Left ventricle myocardium superior (tissue), 1 donor: ENCODE measurements at regions of chr5 and their contacts with region 1.

Region 1: GRCh38 chr5:138077065-138077696 is 6.7 kb upstream of the WNT8A start:
- DNase-seq: peak; percentile 52
- ATAC-seq: peak; percentile 71

Region 2: DNA sequence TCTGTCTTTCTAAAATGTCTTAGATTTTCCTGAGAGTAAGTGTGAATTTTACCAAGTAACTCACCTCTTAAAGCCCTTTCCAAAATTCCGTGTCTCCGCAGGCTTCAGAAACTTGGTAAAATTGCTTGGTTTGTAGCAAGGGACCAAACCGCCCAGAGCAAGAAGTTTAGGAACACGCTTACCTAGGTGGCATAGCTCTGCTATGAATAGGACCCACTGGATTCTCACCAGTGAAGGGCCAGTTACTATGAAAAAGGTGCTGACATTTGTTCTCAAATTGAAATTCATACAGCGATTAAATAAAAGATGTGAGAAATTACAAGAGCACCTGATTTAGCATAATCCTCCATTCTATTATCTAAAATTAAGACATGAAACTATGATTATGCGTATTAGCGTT is 55.4 kb after region 1 on chr5:
- intact Hi-C with region 1: loop called (anchors 5 kb)
- DNase-seq: no peak
- ATAC-seq: no peak

Region 3: GRCh38 chr5:138641547-138642298 is 564.5 kb after region 1 on chr5:
- intact Hi-C with region 1: no loop called
- DNase-seq: peak; percentile 75
- ATAC-seq: peak; percentile 77